Gastrocnemius medialis (tissue), 4 donors: ENCODE measurements at regions of chr5 and their contacts with region 1.

Region 1: DNA sequence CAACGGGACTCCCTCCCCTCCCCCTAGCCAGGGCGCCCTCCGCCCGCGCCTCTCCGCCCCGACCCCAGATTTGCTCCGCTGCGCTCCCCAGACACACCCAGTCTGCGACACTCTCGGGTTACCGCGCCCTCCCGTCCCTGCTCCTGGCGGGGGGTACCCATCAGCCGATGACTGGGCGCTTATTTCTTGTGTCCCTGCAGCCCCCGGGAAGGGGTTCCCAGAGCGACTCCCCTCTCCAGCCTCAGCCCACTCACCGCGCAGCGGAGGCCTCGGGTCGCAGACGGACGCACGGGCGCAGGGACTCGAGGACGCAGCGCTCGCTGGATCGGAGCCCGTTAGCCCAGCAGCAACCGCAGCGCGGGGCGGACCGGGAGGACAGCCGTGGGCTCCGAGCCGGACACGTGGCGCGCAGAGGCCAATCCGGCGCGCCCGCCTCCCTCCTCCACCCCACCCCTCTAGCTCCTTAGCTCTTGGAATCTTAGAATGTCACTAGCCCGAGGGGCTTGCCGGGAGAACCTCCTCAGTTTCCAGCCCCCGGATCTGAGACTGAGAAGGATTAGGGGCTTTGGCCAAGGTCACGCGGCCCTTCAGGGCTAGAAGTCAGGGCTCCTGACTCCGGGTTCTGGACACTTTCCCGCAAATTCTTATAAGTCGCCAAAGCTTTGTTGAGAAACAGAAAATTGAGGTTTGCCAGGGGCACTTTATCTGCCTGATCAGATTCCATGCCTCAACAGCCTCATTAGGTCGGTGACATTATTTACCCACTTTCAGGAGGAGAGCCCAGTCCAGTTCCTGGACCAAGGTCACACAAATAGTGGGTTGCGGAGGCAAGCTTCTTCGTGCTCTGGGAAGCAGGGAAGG is at the start of gene ANXA6:
- DNase-seq: peak; percentile 84 to 88
- ATAC-seq: peak; percentile 91 to 92
- H3K4me3 ChIP-seq: peak within 1 kb of the TSS; percentile 90 to 98 (median 92)
- H3K27ac ChIP-seq: peak within 1 kb of the TSS; percentile 97 to 98 (median 98)
- H3K4me1 ChIP-seq: peaks cover 34 to 38% of the 10 kb centered on the region in 2 donors
- H3K27me3 ChIP-seq: no peaks in the 10 kb centered on the region
- CTCF ChIP-seq: no peak
- POLR2A ChIP-seq: peak; percentile 56 to 76
- total RNA-seq, gene ANXA6: 91.6 to 164 (median 142) TPM

Region 2: DNA sequence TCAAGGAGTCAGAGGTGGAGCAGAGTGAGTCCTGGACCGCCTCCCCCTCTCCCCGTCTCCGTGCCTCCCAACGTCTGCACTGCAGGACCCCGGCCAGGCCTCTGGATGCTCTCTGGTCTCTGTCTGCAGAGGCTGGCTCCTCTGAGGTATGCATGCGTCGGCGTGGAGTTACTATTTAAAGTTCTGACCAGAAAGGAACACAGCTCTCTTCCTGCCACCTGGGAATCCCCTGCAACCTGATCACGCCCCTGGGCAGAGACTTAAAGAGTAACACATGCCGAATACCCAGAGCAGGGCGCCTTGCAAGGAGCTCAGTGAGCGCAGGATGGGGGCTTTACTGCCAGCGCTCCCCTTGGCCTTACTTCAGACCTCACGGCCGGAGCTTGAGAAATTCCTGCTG is 16.1 kb before region 1 on chr5:
- in situ Hi-C with region 1: no loop called
- intact Hi-C with region 1: loop called (anchors 2 kb)
- DNase-seq: peak; percentile 73 to 89
- ATAC-seq: peak; percentile 94
- H3K4me3 ChIP-seq: peak overlapping the region in 2 of 4 donors; percentile 9 to 26
- H3K27ac ChIP-seq: peak overlapping the region; percentile 73 to 84 (median 79)
- H3K4me1 ChIP-seq: peaks cover 50 to 63% of the 10 kb centered on the region in 2 donors
- H3K27me3 ChIP-seq: no peaks in the 10 kb centered on the region
- CTCF ChIP-seq: no peak
- POLR2A ChIP-seq: peak; percentile 49 to 54

Region 3: GRCh38 chr5:151213800-151214613 is 56.4 kb after region 1 on chr5:
- in situ Hi-C with region 1: no loop called
- intact Hi-C with region 1: no loop called
- DNase-seq: peak; percentile 61 to 78
- ATAC-seq: peak; percentile 43 to 63
- H3K4me3 ChIP-seq: peak overlapping the region in 1 of 4 donors; percentile 3
- H3K27ac ChIP-seq: peak overlapping the region; percentile 94 to 97 (median 95)
- H3K4me1 ChIP-seq: peaks cover 84 to 94% of the 10 kb centered on the region in 2 donors
- H3K27me3 ChIP-seq: no peaks in the 10 kb centered on the region
- CTCF ChIP-seq: no peak
- POLR2A ChIP-seq: peak; percentile 37 to 49

Region 4: DNA sequence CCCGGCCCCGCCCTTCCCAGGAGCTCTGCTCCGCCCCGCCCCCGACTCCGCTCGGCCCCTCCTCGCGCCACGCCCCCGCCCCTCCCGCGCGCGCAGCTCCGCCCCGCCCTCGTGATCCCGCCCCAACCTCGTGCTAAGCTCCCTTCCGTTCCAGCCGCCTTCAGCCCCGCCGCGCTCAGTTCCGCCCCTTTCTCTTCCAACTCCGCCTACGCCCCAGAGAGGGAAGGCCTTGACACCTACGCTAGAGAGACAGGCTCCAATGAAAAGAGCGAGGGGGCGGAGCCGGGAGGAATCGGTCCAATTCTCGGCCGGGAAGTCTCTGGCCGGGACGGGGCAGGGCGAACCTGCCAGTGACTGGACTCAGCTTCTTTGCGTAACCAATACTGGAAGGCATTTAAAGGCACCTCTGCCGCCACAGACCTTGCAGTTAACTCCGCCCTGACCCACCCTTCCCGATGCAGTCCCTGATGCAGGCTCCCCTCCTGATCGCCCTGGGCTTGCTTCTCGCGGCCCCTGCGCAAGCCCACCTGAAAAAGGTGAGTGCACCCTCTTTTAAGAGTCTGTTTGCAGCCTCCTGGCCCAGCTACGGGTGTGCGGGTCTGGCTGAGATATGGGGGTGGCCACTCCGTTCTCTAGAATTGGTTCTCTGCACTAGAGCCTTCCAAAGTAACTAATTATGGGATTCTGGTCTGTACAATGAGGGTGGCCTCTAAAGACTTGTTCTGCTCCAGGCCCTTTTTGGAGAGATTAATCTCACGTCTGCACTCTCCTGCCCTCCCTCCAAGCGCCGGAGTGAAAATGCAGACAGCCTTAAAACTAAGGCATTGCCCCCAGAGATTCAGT is 95.3 kb after region 1 on chr5 and contains the start of gene GM2A:
- in situ Hi-C with region 1: no loop called
- intact Hi-C with region 1: loop called (anchors 1 kb)
- DNase-seq: peak; percentile 99 to 100
- ATAC-seq: peak; percentile 96 to 97
- H3K4me3 ChIP-seq: peak within 1 kb of the TSS; percentile 71 to 94 (median 81)
- H3K27ac ChIP-seq: peak within 1 kb of the TSS; percentile 87 to 97 (median 90)
- H3K4me1 ChIP-seq: peaks cover 22 to 27% of the 10 kb centered on the region in 2 donors
- H3K27me3 ChIP-seq: no peaks in the 10 kb centered on the region
- CTCF ChIP-seq: no peak
- POLR2A ChIP-seq: peak; percentile 68 to 91
- total RNA-seq, gene GM2A: 5.0 to 7.2 (median 5.7) TPM